Activated CD8-positive, alpha-beta T cell treated with anti-CD3 and anti-CD28 coated beads for 36 hours (primary cell): ENCODE measurements at regions of chr7 and their contacts with region 1.

Region 1: GRCh38 chr7:98892609-98893008 is 14.3 kb downstream of the TRRAP start:
- DNase-seq: no peak
- ATAC-seq: no peak
- H3K4me3 Mint-ChIP-seq: no peak overlapping the region
- H3K27ac Mint-ChIP-seq: no peak overlapping the region
- H3K4me1 Mint-ChIP-seq: peaks cover 11% of the 10 kb centered on the region
- H3K27me3 Mint-ChIP-seq: no peaks in the 10 kb centered on the region
- CTCF ChIP-seq: no peak

Region 2: DNA sequence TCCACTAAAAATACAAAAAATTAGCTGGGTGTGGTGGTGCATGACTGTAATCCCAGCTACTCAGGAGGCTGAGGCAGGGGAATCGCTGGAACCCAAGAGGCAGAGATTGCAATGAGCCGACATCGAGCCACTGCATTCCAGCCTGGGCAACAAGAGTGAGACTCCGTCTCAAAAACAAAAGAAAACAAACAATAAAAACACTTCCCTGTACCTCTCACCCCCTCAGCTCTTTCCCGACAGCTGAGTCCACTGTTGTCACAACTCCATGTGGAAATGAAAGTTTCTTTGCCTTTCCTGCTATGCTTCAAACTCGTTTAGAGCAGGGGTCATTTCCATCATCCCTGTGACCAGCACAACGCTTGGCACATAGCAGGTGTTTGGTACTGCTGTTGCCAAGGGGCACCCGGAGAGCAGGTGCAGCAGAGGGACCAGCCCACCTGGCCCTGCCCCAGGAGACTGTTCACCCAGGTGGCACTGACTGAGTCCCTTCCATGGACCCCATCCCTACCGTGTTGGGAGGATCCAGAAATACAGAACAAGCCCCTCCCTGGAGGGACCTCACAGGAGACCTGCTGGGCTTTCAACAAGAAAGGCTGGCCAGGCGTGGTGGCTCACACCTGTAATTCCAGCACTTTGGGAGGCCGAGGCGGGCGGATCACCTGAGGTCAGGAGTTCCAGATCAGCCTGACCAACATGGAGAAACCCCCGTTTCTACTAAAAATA is 27.7 kb before region 1 on chr7:
- CTCF ChIA-PET with region 1: no interaction called
- POLR2A ChIA-PET with region 1: no interaction called
- intact Hi-C with region 1: no loop called
- DNase-seq: no peak
- ATAC-seq: no peak
- H3K4me3 Mint-ChIP-seq: no peak overlapping the region
- H3K27ac Mint-ChIP-seq: no peak overlapping the region
- H3K4me1 Mint-ChIP-seq: no peaks in the 10 kb centered on the region
- H3K27me3 Mint-ChIP-seq: peaks cover 21% of the 10 kb centered on the region
- CTCF ChIP-seq: no peak

Region 3: DNA sequence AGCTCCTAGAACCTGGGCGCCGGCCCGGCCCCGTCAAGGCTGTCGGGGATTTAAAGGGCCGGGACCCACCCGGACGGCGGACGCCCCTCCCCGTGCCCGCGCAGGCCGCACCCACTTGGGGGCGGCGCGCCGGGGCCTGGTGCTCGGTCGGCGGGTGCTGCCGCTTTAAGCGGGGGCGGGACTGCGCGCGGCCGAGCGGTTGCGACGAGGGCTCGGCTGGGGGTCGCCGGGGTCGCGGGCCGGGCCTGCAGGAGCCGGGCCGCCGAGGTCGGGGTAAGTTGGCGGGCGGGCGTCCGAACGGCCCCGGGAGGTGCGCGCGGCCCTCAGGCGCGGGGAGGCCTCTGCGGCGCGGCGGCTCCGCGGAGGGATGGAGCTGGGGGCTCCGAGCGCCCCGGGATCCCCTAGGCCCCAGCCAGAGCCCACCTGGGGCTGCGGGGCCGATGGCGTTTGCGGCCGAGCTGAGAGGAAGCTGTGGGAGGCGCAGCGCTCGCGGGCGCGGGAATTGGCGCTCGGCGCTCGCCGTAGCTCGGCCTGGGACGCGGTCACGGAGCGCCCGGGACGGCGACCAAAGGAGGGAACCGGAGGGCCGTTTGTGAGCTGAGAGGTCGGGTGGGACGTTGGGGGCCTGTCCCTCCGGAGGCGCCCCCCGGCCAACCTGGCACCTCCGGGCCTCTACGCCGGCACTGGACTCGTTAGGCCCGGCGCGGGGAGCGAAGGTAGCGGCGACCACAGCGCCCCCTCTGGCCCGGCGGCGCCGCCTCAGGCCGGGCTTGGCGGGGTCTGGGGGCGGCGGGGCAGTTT is 14.0 kb before region 1 on chr7 and contains the start of gene TRRAP:
- CTCF ChIA-PET with region 1: interaction called, 23 read pairs
- POLR2A ChIA-PET with region 1: interaction called, 3 read pairs
- intact Hi-C with region 1: no loop called
- DNase-seq: peak; percentile 81
- ATAC-seq: peak; percentile 69
- H3K4me3 Mint-ChIP-seq: peak within 1 kb of the TSS; percentile 92
- H3K27ac Mint-ChIP-seq: peak within 1 kb of the TSS; percentile 95
- H3K4me1 Mint-ChIP-seq: peaks cover 20% of the 10 kb centered on the region
- H3K27me3 Mint-ChIP-seq: peaks cover 3% of the 10 kb centered on the region
- CTCF ChIP-seq: peak; percentile 98
- total RNA-seq, gene TRRAP: 45.5 to 48.2 TPM